ENCODE measurements at regions of chr2 and their contacts with region 1.

Region 1: GRCh38 chr2:159807183-159808031 is 9.4 kb upstream of the CD302 start:
- DNase-seq: no peak
- H3K4me3 Mint-ChIP-seq: no peak overlapping the region
- H3K27ac Mint-ChIP-seq: no peak overlapping the region
- H3K4me1 Mint-ChIP-seq: no peaks in the 10 kb centered on the region
- H3K27me3 Mint-ChIP-seq: no peaks in the 10 kb centered on the region

Region 2: GRCh38 chr2:159557451-159558034 is 249.9 kb before region 1 on chr2:
- intact Hi-C with region 1: loop called (anchors 5 kb)
- DNase-seq: no peak
- H3K4me3 Mint-ChIP-seq: no peak overlapping the region
- H3K27ac Mint-ChIP-seq: no peak overlapping the region
- H3K4me1 Mint-ChIP-seq: no peaks in the 10 kb centered on the region
- H3K27me3 Mint-ChIP-seq: no peaks in the 10 kb centered on the region

Region 3: DNA sequence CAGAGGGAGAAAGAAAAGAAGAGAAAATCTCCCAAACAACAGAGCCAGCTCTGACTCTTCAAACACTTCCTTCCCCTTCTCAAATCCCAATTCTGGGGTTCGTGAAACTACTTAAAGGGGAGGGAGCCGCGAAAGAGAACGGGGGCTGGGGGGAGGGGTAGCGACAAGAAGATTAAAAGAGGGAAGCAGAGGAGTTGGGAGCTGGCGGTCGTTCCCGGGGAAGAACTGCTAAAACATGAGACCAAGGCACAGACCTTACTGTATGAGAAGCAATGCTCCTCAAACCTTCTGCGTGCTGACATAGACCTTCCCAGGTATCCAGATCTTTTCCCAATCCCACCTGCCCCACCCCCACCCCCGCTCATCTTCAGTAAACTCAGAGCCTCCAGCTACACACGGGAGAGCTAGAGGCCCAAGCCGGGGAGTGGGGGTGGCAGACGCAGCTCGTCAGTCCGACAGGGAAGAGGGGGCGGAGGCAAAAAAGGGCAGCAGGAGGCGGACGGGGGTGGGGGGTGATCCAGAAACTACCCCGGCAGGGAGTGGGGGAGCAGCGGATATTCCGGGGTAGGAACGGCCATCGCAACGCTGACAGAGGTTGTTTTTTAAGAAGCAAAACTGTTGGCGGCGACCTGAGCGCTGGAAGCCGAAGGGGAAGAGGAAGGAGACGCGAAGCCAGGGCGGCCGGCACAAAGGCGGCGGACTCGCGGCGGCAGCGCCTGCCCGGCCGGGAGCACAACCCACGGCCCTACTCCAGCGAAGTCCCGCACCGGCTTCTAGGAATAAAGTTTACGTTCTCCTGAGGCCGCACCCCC is 192.1 kb before region 1 on chr2:
- intact Hi-C with region 1: loop called (anchors 5 kb)
- DNase-seq: peak; percentile 2
- H3K4me3 Mint-ChIP-seq: peak overlapping the region; percentile 83
- H3K27ac Mint-ChIP-seq: peak overlapping the region; percentile 21
- H3K4me1 Mint-ChIP-seq: peaks cover 18% of the 10 kb centered on the region
- H3K27me3 Mint-ChIP-seq: peaks cover 32% of the 10 kb centered on the region